Naive thymus-derived CD8-positive, alpha-beta T cell (primary cell): ENCODE measurements at regions of chr17 and their contacts with region 1.

Region 1: GRCh38 chr17:41918314-41919164 is at the start of gene ACLY:
- DNase-seq: peak; percentile 89 to 96 (median 93)
- ATAC-seq: peak; percentile 97 to 99
- H3K4me3 Mint-ChIP-seq: peak within 1 kb of the TSS; percentile 85 to 95 (median 90)
- H3K27ac Mint-ChIP-seq: peak within 1 kb of the TSS in 9 of 10 donors; percentile 61 to 95 (median 89)
- H3K4me1 Mint-ChIP-seq: peaks cover 16 to 44% (median 34%) of the 10 kb centered on the region in 4 donors
- H3K27me3 Mint-ChIP-seq: no peaks in the 10 kb centered on the region
- polyA plus RNA-seq, gene ACLY: 42.7 to 61.3 (median 50.1) TPM

Region 2: DNA sequence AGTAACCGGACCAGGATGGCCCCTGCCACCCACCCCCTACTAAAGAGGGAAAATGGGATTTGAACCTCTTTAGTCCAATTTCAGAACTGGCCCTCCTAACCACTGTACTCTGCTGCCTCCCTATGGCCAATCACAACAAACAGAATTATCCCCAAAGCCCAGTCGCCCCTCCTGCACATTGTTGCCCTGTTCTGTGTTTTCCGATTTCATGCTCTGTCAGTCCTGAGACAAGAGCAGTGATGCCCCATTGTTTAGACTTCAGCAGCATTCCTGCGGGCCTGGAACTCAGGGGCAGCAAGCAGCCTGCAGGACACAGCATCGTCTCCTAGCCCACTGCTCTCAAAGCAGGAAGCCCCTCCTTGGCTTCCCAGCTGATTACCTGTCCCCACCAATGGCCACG is 32.8 kb before region 1 on chr17:
- POLR2A ChIA-PET with region 1: no interaction called
- DNase-seq: no peak
- ATAC-seq: no peak
- H3K4me3 Mint-ChIP-seq: no peak overlapping the region
- H3K27ac Mint-ChIP-seq: peak overlapping the region in 2 of 10 donors; percentile 17 to 69
- H3K4me1 Mint-ChIP-seq: peaks cover 0 to 7% (median 0%) of the 10 kb centered on the region in 4 donors
- H3K27me3 Mint-ChIP-seq: no peaks in the 10 kb centered on the region

Region 3: GRCh38 chr17:41930009-41930832 is 11.7 kb after region 1 on chr17 and contains the start of gene ODAD4:
- POLR2A ChIA-PET with region 1: interaction called, 37 read pairs
- DNase-seq: peak; percentile 92 to 97 (median 96)
- ATAC-seq: peak; percentile 97 to 98
- H3K4me3 Mint-ChIP-seq: peak within 1 kb of the TSS; percentile 91 to 98 (median 96)
- H3K27ac Mint-ChIP-seq: peak within 1 kb of the TSS; percentile 95 to 99 (median 98)
- H3K4me1 Mint-ChIP-seq: peaks cover 14 to 28% (median 26%) of the 10 kb centered on the region in 4 donors
- H3K27me3 Mint-ChIP-seq: no peaks in the 10 kb centered on the region
- polyA plus RNA-seq, gene ODAD4: 0.08 to 0.09 TPM in 2 of 3 donors, not detected in the other

Region 4: DNA sequence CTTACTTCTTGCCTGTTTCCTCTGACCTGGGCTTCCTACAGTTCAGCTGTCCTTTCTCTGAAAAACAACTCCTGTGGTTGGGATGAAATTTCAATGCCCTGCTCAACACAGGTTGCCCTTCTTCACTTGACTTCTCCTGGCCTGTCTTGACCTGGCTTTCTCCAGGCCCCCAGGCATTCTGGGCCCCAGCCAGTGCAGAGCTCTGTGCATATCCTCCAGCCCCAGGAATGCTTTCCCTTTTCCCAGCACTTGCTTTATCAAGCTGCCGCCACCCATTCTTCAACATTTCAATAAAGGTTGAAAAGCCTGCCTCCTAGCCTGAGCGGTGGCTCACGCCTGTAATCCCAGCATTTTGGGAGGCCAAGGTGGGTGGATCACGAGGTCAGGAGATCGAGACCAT is 22.6 kb after region 1 on chr17:
- POLR2A ChIA-PET with region 1: no interaction called
- DNase-seq: no peak
- ATAC-seq: no peak
- H3K4me3 Mint-ChIP-seq: no peak overlapping the region
- H3K27ac Mint-ChIP-seq: peak overlapping the region in 2 of 10 donors; percentile 49 to 58
- H3K4me1 Mint-ChIP-seq: peaks cover 0 to 4% (median 0%) of the 10 kb centered on the region in 4 donors
- H3K27me3 Mint-ChIP-seq: peaks cover 0 to 5% (median 0%) of the 10 kb centered on the region in 5 donors

Region 5: GRCh38 chr17:42010898-42011516 is 92.5 kb after region 1 on chr17:
- POLR2A ChIA-PET with region 1: no interaction called
- DNase-seq: no peak
- ATAC-seq: no peak
- H3K4me3 Mint-ChIP-seq: peak overlapping the region in 3 of 10 donors; percentile 6 to 12 (median 9)
- H3K27ac Mint-ChIP-seq: peak overlapping the region in 5 of 10 donors; percentile 11 to 55 (median 45)
- H3K4me1 Mint-ChIP-seq: peaks cover 26 to 68% (median 65%) of the 10 kb centered on the region in 4 donors
- H3K27me3 Mint-ChIP-seq: no peaks in the 10 kb centered on the region